HEK293 (cell line): ENCODE measurements at regions of chr5 and their contacts with region 1.

Region 1: DNA sequence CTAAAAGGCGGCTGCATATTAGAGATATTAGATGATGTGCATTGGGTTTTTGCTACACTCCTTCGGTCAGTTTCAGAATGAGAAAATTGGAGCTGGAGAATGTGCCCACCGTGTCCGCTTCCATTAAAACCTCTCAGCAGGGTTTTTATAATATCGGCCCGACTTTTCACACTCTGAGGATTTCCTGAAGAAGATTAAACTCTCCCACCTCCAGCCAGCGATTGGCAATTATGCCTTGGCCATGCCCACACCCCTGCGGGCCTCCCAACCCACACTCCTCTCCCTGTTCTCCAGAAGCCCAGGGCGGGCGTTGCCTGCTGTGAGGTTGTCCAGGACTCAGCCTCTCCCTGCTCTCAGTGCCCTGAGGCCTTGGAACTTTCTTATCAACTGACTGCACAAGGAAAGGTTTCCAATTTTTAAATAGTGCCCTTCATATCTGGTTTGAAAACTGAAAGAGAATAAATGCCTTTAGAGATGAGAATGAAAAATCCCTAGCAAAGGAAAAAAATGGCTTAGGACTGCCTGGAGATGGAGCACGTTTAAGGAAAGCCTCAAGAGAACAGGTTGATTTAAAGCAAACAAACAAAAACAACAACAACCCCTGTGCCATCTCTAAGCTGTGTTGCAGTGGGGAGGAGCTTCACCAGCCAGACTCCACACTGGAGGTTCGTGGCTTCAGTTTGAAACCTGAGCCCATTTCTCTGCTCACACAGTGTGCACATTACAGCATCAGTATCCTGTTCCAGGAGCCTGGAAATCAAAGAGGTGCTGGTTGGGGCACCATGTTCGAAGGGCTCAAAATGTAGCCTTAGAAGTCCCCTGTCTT is 292.9 kb downstream of the NSG2 start:
- H3K4me3 ChIP-seq: peak overlapping the region; percentile 55
- H3K27ac ChIP-seq: peak overlapping the region; percentile 87
- H3K4me1 ChIP-seq: peaks cover 18% of the 10 kb centered on the region
- CTCF ChIP-seq: no peak

Region 2: GRCh38 chr5:174175716-174176268 is 162.6 kb before region 1 on chr5:
- CTCF ChIA-PET with region 1: no interaction called
- POLR2A ChIA-PET with region 1: no interaction called
- H3K4me3 ChIP-seq: no peak overlapping the region
- H3K27ac ChIP-seq: no peak overlapping the region
- H3K4me1 ChIP-seq: no peaks in the 10 kb centered on the region
- CTCF ChIP-seq: no peak

Region 3: DNA sequence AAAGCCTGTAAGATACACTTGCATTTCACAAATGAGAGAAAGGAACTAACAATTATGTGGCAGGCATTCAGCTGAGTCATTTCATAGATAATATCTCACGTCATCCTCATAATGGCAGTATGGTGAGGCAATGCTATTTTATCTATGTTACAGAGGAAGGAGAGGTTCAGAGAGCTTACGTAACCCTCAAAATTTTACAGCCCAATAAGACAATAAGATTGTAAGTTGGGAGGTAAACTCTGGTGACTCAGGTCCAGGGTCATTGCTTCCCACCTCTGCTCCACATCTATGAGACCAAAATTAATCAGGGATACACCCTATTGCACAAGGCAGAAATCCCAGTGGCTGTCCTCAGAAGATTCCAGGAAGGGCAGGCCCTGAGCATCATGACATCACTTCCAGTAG is 16.8 kb after region 1 on chr5:
- CTCF ChIA-PET with region 1: interaction called, 3 read pairs
- POLR2A ChIA-PET with region 1: interaction called, 27 read pairs
- H3K4me3 ChIP-seq: no peak overlapping the region
- H3K27ac ChIP-seq: peak overlapping the region; percentile 40; the same call in 1 of the 2 replicates
- H3K4me1 ChIP-seq: peaks cover 3% of the 10 kb centered on the region
- CTCF ChIP-seq: no peak

Region 4: DNA sequence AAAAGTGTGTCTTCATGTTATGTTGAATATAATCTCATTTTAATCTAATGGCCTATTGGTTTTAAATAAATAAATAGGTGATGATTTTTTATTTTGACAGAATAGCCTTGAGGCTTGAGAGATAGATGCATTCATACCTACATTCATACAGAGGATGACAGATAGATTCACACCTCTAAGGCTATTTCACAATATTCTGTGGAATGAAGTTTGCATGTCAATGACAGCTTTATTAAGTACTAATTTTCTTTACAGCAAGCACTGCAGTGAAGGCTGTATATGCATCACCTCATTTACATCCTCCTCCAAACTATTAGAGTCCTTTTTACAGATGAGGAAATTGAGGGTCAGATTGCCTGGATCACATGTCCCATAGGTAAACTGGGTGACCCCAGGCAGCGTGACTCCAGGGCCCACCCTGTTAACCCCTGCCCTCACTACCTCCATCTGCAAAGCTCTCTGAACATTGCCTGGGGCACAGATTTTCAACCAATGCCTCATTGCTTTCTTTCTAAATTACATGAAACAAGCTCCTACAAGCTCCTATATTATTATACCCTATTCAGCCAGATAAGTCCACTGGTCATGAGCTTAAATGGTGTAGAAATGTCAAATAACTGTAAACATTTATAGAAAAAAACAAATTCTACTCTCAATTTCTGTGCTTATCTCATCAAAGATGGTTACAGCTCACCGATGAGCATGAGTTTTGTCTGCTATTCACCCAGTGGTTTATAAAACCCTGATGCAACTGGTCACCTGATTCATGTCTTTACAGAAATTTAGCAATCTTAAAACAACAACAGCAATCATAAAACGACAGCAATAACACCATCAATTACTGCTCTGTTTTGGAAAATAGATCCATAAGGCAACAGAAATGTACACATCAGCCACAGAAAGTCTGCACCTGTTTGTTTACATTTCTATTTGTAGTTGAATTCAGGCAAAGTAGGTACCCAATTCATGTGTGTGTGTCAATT is 45.1 kb after region 1 on chr5:
- CTCF ChIA-PET with region 1: interaction called, 3 read pairs
- POLR2A ChIA-PET with region 1: interaction called, 10 read pairs
- H3K4me3 ChIP-seq: no peak overlapping the region
- H3K27ac ChIP-seq: peak overlapping the region; percentile 65
- H3K4me1 ChIP-seq: peaks cover 21% of the 10 kb centered on the region
- CTCF ChIP-seq: no peak